ENCODE measurements at regions of chr9 and their contacts with region 1.

Region 1: GRCh38 chr9:37913480-37914153 is 9.7 kb upstream of the SLC25A51 start:
- DNase-seq: peak; percentile 71
- H3K4me3 Mint-ChIP-seq: no peak overlapping the region
- H3K27ac Mint-ChIP-seq: no peak overlapping the region
- H3K4me1 Mint-ChIP-seq: peaks cover 2% of the 10 kb centered on the region
- H3K27me3 Mint-ChIP-seq: no peaks in the 10 kb centered on the region

Region 2: DNA sequence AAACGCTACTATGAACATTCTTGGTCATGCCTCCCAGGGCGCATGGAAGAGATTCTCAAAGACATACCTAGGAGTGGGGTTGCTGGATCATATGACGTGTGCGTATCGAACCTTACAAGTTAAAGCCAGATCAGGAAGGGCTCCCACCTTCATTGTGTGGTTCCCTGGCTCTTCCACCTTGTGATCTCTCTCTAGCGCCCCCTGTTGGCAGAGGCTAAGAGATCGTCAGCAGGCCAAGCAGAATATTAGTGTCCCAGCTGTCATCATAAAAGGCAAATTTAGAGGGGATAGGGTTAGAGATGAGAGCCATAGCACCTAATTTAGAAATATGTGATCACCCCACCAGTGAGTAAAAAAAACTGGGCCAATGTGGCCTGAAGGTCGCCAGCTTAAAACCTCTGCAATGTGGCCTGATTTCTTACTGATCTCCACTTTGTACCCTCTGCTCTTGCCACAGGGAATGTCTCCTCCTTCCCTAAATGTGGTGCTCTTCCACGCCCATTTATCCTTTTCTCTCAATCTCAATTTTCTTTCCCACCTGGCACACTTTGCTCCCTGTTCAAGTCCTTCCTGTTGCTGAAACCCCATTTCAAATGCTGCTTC is 247.1 kb after region 1 on chr9:
- intact Hi-C with region 1: loop called (anchors 2 kb)
- DNase-seq: peak; percentile 37
- H3K4me3 Mint-ChIP-seq: no peak overlapping the region
- H3K27ac Mint-ChIP-seq: no peak overlapping the region
- H3K4me1 Mint-ChIP-seq: no peaks in the 10 kb centered on the region
- H3K27me3 Mint-ChIP-seq: no peaks in the 10 kb centered on the region